ENCODE measurements at regions of chr11 and their contacts with region 1.

Region 1: DNA sequence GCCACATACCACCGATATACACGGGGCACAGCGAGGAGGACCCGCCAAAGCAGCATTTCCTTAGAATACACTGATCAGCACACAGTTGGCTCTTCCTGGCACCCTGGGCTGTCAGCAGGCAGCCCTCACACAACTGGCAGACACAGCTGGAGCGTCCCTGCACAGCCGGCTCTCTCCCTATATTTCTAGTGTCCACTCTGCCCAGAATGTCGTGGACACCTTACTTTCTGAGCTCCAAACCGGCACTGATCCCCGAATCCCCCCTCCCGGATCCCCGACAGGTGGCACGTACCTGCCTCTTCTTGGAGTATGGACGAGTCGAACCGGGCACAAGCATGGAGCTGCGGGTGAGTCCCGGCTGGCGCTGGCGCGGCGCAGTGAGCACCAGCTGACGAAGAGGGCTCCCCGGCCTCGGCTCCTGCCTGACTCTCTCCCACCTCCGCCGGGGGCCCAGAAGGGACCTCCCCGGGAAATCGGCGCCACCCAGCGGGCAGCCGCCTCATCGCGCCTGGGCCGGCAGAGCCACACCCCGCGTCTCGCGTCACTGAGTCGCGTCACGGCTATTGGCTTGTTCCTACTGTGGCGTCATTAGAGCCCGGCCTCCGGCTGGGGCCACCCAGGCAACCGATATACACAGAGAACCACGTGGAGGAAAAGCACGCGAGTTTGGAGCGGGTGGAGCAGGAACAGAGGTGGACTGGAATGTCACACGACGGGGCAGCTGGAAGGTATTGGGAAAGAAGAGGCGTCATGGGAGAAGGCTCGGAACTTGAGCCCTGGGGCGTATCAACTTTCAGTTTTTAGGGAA is at the start of gene USP2:
- DNase-seq: peak; percentile 97
- H3K4me3 ChIP-seq: peak within 1 kb of the TSS; percentile 48 to 60 (median 55)
- H3K27ac ChIP-seq: peak within 1 kb of the TSS; percentile 90
- H3K4me1 ChIP-seq: peaks cover 38% of the 10 kb centered on the region
- H3K27me3 ChIP-seq: no peaks in the 10 kb centered on the region
- CTCF ChIP-seq: peak; percentile 62 to 89
- total RNA-seq, gene USP2: 2.7 to 3.0 TPM

Region 2: GRCh38 chr11:119315131-119316015 is 66.0 kb before region 1 on chr11:
- CTCF ChIA-PET with region 1: interaction called, 5 read pairs
- dilution Hi-C with region 1: no loop called
- in situ Hi-C with region 1: no loop called
- intact Hi-C with region 1: loop called (anchors 2 kb)
- DNase-seq: peak; percentile 56
- H3K4me3 ChIP-seq: peak overlapping the region; percentile 37 to 52 (median 48)
- H3K27ac ChIP-seq: no peak overlapping the region
- H3K4me1 ChIP-seq: peaks cover 67% of the 10 kb centered on the region
- H3K27me3 ChIP-seq: no peaks in the 10 kb centered on the region
- CTCF ChIP-seq: no peak

Region 3: DNA sequence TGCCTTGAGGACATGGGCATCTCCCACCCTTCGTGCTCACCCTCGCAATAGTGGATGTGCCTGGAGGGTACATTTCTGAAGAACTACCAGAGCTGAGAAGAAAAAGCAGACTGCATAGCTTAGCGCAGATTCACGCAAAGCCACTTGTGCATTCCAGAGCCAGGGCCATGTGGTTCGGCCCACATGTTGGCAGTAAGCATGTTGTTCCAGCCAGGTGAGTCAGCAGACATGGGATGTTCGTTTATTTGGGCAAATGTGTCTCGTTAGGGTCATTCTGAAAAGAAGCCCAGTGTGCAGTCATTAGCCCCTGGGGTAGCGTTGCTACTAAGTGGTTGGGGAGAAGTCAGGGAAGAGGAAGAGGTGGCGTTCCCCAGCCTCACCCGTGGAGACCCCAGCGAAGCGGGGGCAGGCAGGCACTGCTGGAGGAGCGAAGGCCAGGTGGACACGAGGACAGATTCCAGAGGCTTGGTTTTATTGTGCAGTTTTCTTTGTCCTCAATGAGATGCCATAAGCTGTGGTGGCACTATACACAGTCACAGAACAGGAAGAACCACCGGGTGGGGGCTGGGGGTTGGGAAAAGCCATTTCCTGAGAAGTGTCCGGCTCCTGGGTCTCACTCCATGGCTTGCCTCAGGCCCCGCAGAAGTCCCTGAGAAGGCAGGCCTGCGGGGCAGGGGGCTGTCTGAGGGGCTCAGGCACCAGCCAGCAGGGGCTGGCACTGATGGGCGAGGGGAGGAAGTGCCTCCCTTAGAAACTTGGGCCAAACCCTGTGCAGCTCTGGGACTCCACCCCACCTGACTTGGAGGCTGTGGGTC is 36.5 kb after region 1 on chr11:
- CTCF ChIA-PET with region 1: no interaction called
- dilution Hi-C with region 1: no loop called
- in situ Hi-C with region 1: no loop called
- intact Hi-C with region 1: loop called (anchors 2 kb)
- DNase-seq: peak; percentile 81
- H3K4me3 ChIP-seq: peak overlapping the region in 1 of 3 experiments; percentile 4
- H3K27ac ChIP-seq: peak overlapping the region; percentile 48
- H3K4me1 ChIP-seq: peaks cover 36% of the 10 kb centered on the region
- H3K27me3 ChIP-seq: no peaks in the 10 kb centered on the region
- CTCF ChIP-seq: no peak

Region 4: GRCh38 chr11:119432484-119433357 is 51.3 kb after region 1 on chr11:
- CTCF ChIA-PET with region 1: interaction called, 12 read pairs
- dilution Hi-C with region 1: loop called (anchors 5 kb)
- in situ Hi-C with region 1: no loop called
- intact Hi-C with region 1: no loop called
- DNase-seq: peak; percentile 17
- H3K4me3 ChIP-seq: peak overlapping the region in 1 of 3 experiments; percentile 20
- H3K27ac ChIP-seq: peak overlapping the region; percentile 41
- H3K4me1 ChIP-seq: peaks cover 19% of the 10 kb centered on the region
- H3K27me3 ChIP-seq: no peaks in the 10 kb centered on the region
- CTCF ChIP-seq: no peak

Region 5: GRCh38 chr11:120128782-120129172 is 747.4 kb after region 1 on chr11:
- CTCF ChIA-PET with region 1: no interaction called
- dilution Hi-C with region 1: no loop called
- in situ Hi-C with region 1: no loop called
- intact Hi-C with region 1: loop called (anchors 10 kb)
- DNase-seq: peak; percentile 95
- H3K4me3 ChIP-seq: peak overlapping the region in 1 of 3 experiments; percentile 24
- H3K27ac ChIP-seq: peak overlapping the region; percentile 97
- H3K4me1 ChIP-seq: peaks cover 82% of the 10 kb centered on the region
- H3K27me3 ChIP-seq: no peaks in the 10 kb centered on the region
- CTCF ChIP-seq: no peak

Measured in mammary epithelial cell (primary cell).